Transverse colon (tissue), 4 donors: ENCODE measurements at regions of chr1 and their contacts with region 1.

Region 1: DNA sequence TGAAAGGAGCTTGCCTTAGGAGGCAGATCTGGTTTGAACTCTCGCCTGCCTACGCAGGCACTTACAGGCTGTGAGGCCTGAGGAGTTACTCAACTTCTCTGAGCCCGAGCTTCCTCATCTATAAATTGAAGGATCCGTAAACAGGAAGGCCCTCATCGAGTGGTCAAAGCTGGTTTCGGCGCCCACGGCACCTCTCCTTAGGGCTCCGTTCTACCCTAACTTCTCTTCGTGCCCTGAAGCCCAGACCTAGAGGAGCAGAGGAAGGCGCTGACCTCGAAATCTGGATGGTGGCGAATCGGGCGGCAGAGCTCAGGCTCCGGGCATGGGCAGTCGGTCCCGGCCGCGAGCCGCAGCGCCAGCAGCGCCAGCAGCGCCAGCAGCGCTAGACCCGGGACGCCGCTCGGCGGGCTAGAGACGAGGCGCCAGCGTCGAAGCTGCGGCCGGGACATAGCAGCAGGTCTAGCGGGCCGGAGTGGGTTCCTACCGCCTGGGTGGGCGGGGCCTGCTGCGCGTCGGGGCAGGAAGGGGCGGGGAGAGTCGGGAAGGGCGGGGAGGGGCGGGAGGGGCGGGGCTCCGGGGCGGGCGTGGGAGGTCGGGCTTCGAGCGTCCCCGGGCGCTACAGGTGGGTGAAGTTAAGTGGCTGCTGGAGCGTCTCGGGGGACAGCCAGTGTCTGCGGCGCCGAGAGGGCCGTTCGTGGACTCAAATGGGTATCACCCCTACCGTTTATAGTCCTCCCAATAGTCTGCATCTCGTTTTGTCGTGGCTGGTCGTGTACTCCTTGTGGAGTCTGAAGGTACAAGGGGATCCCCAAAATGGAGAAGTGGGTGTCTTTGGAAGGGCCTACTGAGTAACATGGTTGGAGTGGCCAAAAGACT is at the start of gene CTBS:
- DNase-seq: peak; percentile 93
- H3K4me3 ChIP-seq: peak within 1 kb of the TSS; percentile 51 to 67 (median 60)
- H3K27ac ChIP-seq: peak within 1 kb of the TSS; percentile 96 to 100 (median 98)
- H3K4me1 ChIP-seq: peaks cover 7 to 25% (median 12%) of the 10 kb centered on the region in 4 donors
- H3K27me3 ChIP-seq: no peaks in the 10 kb centered on the region
- CTCF ChIP-seq: no peak
- EP300 ChIP-seq: no peak
- POLR2A ChIP-seq: peak; percentile 83
- total RNA-seq, gene CTBS: 3.8 to 25.7 (median 16.2) TPM

Region 2: GRCh38 chr1:84223751-84224432 is 350.3 kb before region 1 on chr1:
- in situ Hi-C with region 1: no loop called
- intact Hi-C with region 1: loop called (anchors 5 kb)
- DNase-seq: no peak
- H3K4me3 ChIP-seq: no peak overlapping the region
- H3K27ac ChIP-seq: no peak overlapping the region
- H3K4me1 ChIP-seq: no peaks in the 10 kb centered on the region
- H3K27me3 ChIP-seq: no peaks in the 10 kb centered on the region
- CTCF ChIP-seq: no peak
- EP300 ChIP-seq: no peak
- POLR2A ChIP-seq: no peak

Region 3: DNA sequence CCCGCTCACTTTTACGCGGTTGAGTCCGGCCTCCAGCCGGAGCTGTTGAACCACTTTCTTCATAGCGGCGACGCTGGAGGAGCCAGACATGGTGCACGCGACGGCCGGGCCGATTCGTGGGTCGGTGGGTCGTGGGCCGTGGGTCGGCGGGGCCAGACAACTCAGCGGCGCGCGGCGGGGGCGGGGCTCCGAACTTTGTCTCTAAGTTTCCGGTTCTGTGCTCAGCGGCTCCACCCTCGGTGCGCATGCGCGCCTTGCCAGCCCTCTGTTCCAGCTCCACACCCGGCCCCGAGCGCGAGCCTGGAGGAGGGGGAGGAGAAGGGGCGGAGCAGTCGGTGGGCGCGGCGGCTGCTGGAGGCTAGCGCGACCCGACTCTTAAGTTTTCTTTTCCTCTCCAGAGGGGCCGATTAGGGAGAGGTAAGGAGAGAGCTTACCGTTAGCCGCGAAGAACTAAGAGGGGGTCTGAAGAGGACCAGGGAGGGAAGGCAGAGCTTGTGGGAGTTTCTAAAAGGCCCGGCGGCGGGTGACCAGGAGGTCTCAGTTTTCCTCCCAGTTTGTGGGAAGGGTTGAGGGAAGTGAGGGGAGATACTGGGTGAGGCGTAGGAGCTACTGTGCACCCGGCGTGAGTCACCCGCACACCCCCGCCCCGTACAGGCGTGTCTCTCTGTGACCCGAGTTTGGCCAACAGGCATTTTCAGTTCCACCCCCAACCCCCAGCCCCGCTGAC is 68.0 kb before region 1 on chr1 and contains the starts of genes GNG5 and SPATA1:
- in situ Hi-C with region 1: loop called in 1 of 4 experiments (anchors 10 kb)
- intact Hi-C with region 1: loop called (anchors 10 kb)
- DNase-seq: peak; percentile 99
- H3K4me3 ChIP-seq: peak within 1 kb of the TSS; percentile 63 to 93 (median 74)
- H3K27ac ChIP-seq: peak within 1 kb of the TSS; percentile 96 to 99 (median 97)
- H3K4me1 ChIP-seq: peaks cover 15 to 45% (median 31%) of the 10 kb centered on the region in 4 donors
- H3K27me3 ChIP-seq: no peaks in the 10 kb centered on the region
- CTCF ChIP-seq: no peak
- EP300 ChIP-seq: no peak
- POLR2A ChIP-seq: peak; percentile 97
- total RNA-seq, gene GNG5: 19.1 to 172 (median 127) TPM
- total RNA-seq, gene SPATA1: 0.14 to 1.6 TPM in 2 of 4 donors, not detected in the others

Region 4: DNA sequence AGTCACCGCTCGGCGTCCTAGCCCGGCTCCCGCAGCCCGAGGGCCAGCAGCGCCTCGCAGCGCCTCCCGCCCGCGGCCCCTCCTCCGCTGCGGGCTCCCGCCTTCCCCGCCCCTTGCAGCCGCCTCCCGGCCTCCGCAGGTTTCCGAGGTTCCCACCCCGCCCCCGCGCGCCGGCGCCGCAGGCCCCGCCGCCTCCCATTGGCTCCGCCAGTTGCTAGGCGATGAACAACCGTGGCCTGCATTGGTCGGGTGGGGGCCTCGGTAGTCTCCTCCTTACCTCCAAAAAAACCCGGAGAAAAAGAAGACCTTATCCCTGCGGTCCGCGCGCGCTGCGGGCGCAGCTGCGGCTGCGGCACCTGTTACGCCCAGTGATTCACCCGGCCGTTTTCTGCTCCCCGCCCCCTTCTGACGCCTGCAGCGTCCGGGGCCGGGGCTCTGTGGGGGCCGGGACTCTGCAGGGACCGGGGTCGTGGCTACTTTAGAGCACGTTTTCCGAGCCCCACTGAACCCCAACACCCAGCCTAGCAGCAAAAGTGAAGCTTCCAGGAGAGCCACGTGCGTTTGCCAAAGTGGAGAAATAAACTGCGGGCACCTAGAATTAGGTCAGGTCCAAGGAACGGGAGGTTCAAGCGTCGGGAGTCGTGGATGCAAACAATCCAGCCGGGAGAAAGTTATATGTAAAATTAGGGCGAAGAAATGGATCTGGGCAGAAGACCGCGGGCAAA is 116.4 kb after region 1 on chr1 and contains the start of gene SSX2IP:
- in situ Hi-C with region 1: no loop called
- intact Hi-C with region 1: loop called (anchors 5 kb)
- DNase-seq: peak; percentile 100
- H3K4me3 ChIP-seq: peak within 1 kb of the TSS; percentile 84 to 90 (median 85)
- H3K27ac ChIP-seq: peak within 1 kb of the TSS; percentile 88 to 95 (median 92)
- H3K4me1 ChIP-seq: peaks cover 0 to 28% (median 14%) of the 10 kb centered on the region in 4 donors
- H3K27me3 ChIP-seq: no peaks in the 10 kb centered on the region
- CTCF ChIP-seq: no peak
- EP300 ChIP-seq: no peak
- POLR2A ChIP-seq: peak; percentile 51
- total RNA-seq, gene SSX2IP: 7.1 to 15.2 (median 11.4) TPM